ENCODE measurements at regions of chr13 and their contacts with region 1.

Region 1: GRCh38 chr13:75372517-75372916 is 109.5 kb downstream of the TBC1D4 start:
- DNase-seq: no peak
- H3K4me3 ChIP-seq: no peak overlapping the region
- H3K27ac ChIP-seq: peak overlapping the region in 4 of 8 donors; percentile 5 to 34 (median 28)
- H3K4me1 ChIP-seq: peaks cover 0 to 31% (median 6%) of the 10 kb centered on the region in 6 donors
- H3K27me3 ChIP-seq: no peaks in the 10 kb centered on the region
- CTCF ChIP-seq: peak in 10 of 11 experiments; percentile 25 to 75 (median 60)
- POLR2A ChIP-seq: no peak

Region 2: DNA sequence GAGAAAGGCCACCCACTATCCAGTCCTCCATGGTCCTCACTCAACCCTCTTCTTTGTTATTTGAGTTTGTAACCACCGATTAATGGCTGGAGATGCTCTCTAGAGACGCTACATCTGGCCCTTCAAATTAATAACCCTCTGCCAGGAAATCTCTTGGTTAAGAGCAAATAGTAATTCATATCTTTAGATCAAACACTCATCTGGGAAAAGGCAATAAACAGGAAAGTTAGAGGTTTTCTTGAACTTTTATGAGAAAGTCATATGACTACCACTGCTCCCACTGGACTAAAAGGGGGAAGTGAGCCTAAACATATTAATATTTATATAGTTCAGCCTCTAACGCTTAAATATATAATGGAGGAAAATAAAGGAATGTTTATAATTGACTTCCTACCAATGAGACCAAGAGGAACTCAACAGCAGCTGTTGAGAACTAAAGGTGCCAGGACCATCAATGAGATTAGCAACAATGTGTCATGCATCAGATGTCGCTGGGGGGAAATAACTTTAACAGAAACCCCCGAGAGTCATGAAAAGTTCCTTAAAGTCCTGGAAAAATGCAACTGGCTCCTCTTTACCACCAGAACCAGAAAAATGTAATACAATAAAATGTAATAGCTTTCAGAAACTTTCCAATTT is 106.7 kb after region 1 on chr13:
- intact Hi-C with region 1: loop called (anchors 5 kb)
- DNase-seq: no peak
- H3K4me3 ChIP-seq: peak overlapping the region in 1 of 8 donors; percentile 84
- H3K27ac ChIP-seq: no peak overlapping the region
- H3K4me1 ChIP-seq: peaks cover 5 to 49% (median 33%) of the 10 kb centered on the region in 6 donors
- H3K27me3 ChIP-seq: peaks cover 0 to 58% (median 25%) of the 10 kb centered on the region in 7 donors
- CTCF ChIP-seq: no peak
- POLR2A ChIP-seq: no peak

Region 3: DNA sequence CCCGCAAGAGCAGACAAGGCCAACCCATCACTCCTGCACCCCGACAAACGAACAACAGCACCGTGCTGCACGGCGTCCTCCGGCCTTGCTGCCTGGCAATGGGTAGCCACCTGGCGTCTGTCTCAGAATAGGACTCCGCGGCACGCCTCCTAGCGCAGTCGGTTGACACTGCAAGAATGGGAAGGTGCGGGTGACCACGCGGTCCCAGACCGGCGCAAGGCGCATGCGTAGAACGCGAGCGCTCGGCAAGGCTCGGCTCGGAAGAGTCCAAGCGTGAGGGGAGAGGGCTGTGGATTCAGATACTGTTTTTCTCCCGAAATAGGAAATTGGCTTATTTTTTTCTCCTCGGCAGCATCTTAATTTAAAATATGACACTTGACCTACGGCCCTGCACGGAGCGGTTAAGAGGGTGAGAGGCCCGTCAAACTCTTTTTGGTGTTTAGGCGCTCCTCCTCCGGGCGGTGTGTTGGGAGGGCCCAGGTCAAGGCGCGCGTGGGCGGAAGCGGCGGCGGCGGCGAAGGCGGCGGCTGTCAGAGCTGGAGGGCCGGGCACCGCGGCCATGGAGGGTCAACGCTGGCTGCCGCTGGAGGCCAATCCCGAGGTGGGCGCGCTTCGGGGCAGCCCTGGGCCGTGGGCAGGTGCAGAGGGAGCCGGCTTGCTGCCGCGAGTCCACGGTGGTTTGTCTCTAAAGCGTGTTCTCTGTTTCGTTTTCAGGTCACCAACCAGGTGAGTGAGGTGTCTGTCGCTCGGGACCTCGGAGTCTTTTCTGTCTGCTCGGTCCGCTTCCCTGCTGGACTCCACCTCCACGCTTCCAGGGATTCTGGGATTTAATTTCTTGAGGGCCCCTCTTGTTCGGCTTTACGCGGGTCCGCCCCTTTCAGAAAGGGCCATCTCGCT is 177.0 kb after region 1 on chr13 and contains the start of gene UCHL3:
- intact Hi-C with region 1: loop called (anchors 10 kb)
- DNase-seq: peak; percentile 99
- H3K4me3 ChIP-seq: peak within 1 kb of the TSS; percentile 84 to 100 (median 94)
- H3K27ac ChIP-seq: peak within 1 kb of the TSS; percentile 81 to 95 (median 86)
- H3K4me1 ChIP-seq: peaks cover 10 to 38% (median 22%) of the 10 kb centered on the region in 6 donors
- H3K27me3 ChIP-seq: no peaks in the 10 kb centered on the region
- CTCF ChIP-seq: peak; percentile 88 to 97 (median 95)
- POLR2A ChIP-seq: peak in 1 of 3 donors; percentile 62
- total RNA-seq, gene UCHL3: 18.9 to 26.9 (median 23.9) TPM

Measured in spleen (tissue), 13 donors.